GM18951 (cell line): ENCODE measurements at regions of chr2 and their contacts with region 1.

Region 1: DNA sequence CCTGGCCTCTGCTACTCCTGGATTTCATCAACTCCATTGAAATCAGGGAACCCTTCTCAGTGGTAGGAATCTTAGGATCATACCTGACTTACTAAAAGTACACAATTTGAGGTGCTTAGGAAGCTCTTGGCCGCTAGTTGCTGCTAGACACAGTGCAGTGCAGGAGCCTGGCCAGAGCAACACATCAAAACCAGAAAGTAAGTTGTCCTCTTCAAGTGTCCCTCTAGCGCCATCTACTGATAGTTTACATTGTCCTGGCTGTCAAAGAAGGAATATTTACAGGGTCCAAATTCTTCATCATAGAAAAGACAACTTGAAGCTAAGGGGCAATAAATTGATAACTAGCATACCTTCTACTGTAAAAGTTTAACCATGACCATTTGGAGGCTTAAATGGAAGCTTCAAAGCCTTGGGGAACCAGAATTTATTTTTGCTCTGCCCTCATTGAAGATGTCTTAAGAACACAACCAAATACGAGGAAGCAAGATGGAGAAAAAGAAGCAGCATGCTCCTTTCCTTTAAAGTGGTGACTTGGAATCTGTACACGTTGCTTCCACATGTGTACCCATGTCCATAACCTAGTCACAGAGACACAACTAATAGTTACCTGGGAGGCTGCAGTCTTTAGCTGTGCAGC is 889.1 kb upstream of the GCFC2 start:
- POLR2A ChIP-seq: no peak

Region 2: DNA sequence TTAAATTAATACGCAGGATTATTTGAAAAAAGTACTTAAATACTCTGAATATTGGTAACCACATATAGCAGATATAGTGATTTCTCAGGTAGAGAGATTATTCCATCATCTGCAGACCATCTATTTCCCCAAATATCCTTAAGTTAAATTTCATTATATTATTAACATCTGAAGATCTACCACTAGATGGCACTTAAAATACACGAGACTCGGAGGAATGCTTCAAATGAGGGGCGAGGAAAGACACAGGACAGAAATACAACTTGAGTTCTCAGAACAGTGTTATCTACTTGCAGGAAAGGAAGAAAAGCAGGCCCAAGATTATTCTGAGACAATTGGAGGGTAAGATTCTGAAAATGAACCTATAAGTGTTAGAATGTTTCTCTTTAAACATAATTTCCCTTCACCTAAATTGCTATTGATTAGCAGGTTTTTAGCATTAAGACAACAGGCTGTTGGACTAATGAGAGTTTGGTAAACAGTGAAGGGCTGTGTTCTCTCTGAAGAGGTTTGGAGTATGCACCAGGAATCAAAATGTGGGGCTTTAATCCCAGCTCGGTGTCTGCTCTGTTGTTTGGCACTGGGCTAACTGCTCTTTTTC is 812.2 kb before region 1 on chr2:
- in situ Hi-C with region 1: loop called (anchors 25 kb)
- POLR2A ChIP-seq: no peak

Region 3: GRCh38 chr2:77284353-77284752 is 684.5 kb after region 1 on chr2:
- in situ Hi-C with region 1: no loop called
- POLR2A ChIP-seq: no peak